H1 (cell line): ENCODE measurements at regions of chr4 and their contacts with region 1.

Region 1: DNA sequence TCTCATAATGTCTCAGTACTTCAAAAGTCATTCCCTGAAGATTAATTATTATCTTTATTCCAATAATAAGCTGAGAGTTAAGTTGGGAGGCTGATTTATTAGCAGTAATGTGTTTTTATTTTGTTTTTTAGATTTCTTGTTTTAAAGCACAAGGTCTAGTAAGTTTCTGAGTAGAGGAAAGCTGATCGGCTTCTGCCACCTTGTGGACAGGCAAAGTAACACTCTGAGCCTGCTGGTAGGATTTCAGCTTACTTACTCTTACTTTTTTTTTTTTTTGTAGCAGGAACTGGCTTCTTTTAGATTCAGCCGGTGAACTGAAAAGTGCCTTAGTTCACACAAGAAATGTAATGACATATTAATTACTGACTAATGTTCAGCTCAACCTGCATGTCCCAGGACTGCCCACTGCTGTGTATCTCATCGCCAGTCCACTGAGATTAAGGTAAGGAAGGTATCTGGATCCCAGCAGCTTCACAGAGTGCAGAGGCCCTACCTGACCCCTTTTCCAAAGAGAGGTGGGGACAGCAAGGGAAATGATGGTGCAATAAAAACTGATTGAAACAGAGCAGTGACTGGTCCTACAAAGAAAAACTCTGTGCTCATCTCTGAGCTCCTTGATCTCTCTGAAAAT is 126.5 kb downstream of the ADGRA3 start:
- DNase-seq: peak in 1 of 2 experiments; percentile 27
- H3K4me3 ChIP-seq: no peak overlapping the region
- H3K27ac ChIP-seq: no peak overlapping the region
- H3K4me1 ChIP-seq: no peaks in the 10 kb centered on the region
- H3K27me3 ChIP-seq: no peaks in the 10 kb centered on the region
- CTCF ChIP-seq: peak in 2 of 3 experiments; percentile 71 to 82; a peak in 3 of 4 replicates
- EP300 ChIP-seq: no peak
- POLR2A ChIP-seq: no peak
- RAD21 ChIP-seq: peak; percentile 91 to 92

Region 2: GRCh38 chr4:21948347-21949072 is 440.8 kb before region 1 on chr4 and contains the start of gene KCNIP4:
- CTCF ChIA-PET with region 1: interaction called, 12 read pairs
- POLR2A ChIA-PET with region 1: no interaction called
- DNase-seq: peak in 1 of 2 experiments; percentile 77
- H3K4me3 ChIP-seq: peak within 1 kb of the TSS; percentile 46 to 73 (median 56)
- H3K27ac ChIP-seq: no peak within 1 kb of the TSS
- H3K4me1 ChIP-seq: peaks cover 0 to 3% (median under 1%) of the 10 kb centered on the region in 4 experiments; a peak in 1 of 7 replicates
- H3K27me3 ChIP-seq: peaks cover 13 to 30% (median 26%) of the 10 kb centered on the region in 4 experiments
- CTCF ChIP-seq: peak; percentile 0 to 47 (median 20); a peak in 2 of 4 replicates
- EP300 ChIP-seq: no peak
- POLR2A ChIP-seq: no peak
- RAD21 ChIP-seq: no peak; a peak in 2 of 4 replicates
- total RNA-seq, gene KCNIP4: not detected in 2 replicates

Region 3: DNA sequence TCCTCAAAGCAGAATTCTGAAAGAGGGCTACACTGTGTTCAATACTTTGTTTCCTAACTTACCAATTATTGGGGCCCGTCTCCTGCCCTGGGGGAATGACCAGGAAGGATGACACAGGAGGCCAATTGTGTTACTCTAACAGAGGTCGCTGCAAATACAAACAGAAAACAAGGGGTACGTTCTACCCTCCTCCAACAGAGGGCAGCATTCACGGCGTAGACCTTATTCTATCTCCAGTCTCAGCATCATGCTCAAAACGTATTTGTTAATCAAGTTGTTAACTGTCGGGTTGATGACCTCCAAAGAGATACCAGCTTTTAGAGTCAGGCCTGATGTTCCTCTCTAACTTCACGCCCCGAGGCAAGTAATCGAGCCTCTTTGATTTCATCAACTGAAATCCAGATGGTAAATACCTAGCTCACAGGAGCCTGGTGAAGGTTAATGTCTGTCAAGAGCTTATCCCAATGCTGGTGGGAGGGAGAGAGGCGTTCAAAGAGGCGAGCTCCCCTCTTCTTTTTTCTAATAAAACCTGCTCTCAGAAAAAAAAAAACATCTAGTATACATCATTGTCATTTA is 259.8 kb before region 1 on chr4:
- CTCF ChIA-PET with region 1: interaction called, 31 read pairs
- POLR2A ChIA-PET with region 1: no interaction called
- DNase-seq: peak; percentile 53 to 75
- H3K4me3 ChIP-seq: no peak overlapping the region
- H3K27ac ChIP-seq: no peak overlapping the region
- H3K4me1 ChIP-seq: no peaks in the 10 kb centered on the region; a peak in 1 of 7 replicates
- H3K27me3 ChIP-seq: no peaks in the 10 kb centered on the region
- CTCF ChIP-seq: peak in 2 of 3 experiments; percentile 76 to 86; a peak in 3 of 4 replicates
- EP300 ChIP-seq: no peak
- POLR2A ChIP-seq: no peak
- RAD21 ChIP-seq: peak; percentile 70 to 78

Region 4: DNA sequence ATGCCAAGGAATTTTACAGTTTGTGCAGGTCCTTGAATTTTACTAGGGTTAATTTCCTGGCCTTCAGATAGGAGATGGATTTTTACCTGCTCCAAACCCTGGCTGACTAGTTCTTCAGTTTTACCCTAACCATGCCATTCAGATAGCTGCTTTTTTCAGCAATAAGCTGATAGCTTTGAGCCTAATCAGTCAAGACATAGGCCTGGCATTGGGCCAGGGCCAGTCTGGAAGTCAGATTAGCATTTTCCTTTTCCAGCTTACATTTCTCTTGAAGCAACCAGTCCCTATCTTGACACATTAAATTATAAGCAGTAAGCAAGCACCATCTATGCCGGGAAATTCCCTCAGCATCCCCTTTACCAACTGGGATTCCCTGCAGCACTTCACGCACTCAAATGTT is 50.6 kb before region 1 on chr4:
- CTCF ChIA-PET with region 1: interaction called, 20 read pairs
- POLR2A ChIA-PET with region 1: no interaction called
- DNase-seq: no peak
- H3K4me3 ChIP-seq: no peak overlapping the region
- H3K27ac ChIP-seq: no peak overlapping the region
- H3K4me1 ChIP-seq: no peaks in the 10 kb centered on the region
- H3K27me3 ChIP-seq: no peaks in the 10 kb centered on the region
- CTCF ChIP-seq: no peak
- EP300 ChIP-seq: no peak
- POLR2A ChIP-seq: no peak
- RAD21 ChIP-seq: no peak

Region 5: GRCh38 chr4:22410645-22411247 is 21.4 kb after region 1 on chr4:
- CTCF ChIA-PET with region 1: interaction called, 20 read pairs
- POLR2A ChIA-PET with region 1: no interaction called
- DNase-seq: no peak
- H3K4me3 ChIP-seq: no peak overlapping the region
- H3K27ac ChIP-seq: no peak overlapping the region
- H3K4me1 ChIP-seq: no peaks in the 10 kb centered on the region
- H3K27me3 ChIP-seq: no peaks in the 10 kb centered on the region
- CTCF ChIP-seq: peak in 1 of 3 experiments; percentile 16; a peak in 1 of 4 replicates
- EP300 ChIP-seq: no peak
- POLR2A ChIP-seq: no peak
- RAD21 ChIP-seq: peak in 1 of 2 experiments; percentile 22; a peak in 2 of 4 replicates